ENCODE measurements at regions of chr22 and their contacts with region 1.

Region 1: DNA sequence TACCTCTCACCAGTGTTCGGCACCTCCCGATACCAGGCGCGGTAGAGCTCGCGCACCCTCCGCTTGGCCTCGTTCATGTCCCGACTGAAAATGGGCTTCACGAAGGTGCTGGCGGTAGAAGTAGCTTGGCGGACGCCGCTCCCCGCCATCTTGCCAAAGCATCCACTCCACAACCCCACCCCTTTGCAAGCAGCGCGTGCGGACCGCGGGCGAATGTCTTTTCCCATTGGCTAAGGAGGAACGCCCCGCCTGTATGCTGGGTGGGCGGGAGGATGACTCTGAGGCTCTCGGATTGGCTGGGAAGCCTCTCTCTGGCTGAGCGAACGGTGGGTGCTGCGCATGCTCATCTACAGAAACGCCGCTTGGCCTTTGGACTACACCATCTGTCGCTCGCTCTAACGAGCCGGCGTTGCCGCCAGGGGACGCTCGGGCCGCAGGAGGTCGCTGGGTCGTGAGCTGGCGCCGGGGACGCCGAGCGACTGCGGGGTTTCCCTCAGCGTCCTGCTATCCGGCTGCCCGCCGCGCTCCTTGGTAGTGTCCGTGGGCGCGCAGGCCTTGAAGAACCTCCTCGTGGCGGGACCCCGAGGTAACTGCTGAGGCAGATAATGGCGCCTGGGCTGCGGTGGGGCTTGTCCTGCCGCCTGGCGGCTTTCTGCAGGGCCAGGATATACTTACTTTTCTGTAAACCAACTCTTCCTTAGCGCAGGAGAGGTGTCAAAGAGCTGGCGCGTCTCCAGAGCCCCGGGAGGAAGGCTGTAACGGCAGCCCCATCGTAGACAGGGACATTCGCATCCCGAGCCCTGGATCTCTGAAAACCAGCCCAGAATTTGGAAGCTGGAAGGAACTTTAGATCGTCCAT is at the start of gene NDUFA6:
- DNase-seq: peak; percentile 99
- ATAC-seq: peak; percentile 87
- H3K4me3 ChIP-seq: peak within 1 kb of the TSS; percentile 74 to 95 (median 91)
- H3K4me3 Mint-ChIP-seq: peak within 1 kb of the TSS; percentile 98
- H3K27ac ChIP-seq: peak within 1 kb of the TSS; percentile 89 to 96
- H3K27ac Mint-ChIP-seq: peak within 1 kb of the TSS; percentile 99
- H3K4me1 ChIP-seq: peaks cover 17 to 22% of the 10 kb centered on the region in 2 donors
- H3K4me1 Mint-ChIP-seq: peaks cover 31% of the 10 kb centered on the region
- H3K27me3 ChIP-seq: no peaks in the 10 kb centered on the region
- H3K27me3 Mint-ChIP-seq: no peaks in the 10 kb centered on the region
- CTCF ChIP-seq: peak; percentile 92
- total RNA-seq, gene NDUFA6: 47.8 and 51.5 TPM in 2 replicates

Region 2: DNA sequence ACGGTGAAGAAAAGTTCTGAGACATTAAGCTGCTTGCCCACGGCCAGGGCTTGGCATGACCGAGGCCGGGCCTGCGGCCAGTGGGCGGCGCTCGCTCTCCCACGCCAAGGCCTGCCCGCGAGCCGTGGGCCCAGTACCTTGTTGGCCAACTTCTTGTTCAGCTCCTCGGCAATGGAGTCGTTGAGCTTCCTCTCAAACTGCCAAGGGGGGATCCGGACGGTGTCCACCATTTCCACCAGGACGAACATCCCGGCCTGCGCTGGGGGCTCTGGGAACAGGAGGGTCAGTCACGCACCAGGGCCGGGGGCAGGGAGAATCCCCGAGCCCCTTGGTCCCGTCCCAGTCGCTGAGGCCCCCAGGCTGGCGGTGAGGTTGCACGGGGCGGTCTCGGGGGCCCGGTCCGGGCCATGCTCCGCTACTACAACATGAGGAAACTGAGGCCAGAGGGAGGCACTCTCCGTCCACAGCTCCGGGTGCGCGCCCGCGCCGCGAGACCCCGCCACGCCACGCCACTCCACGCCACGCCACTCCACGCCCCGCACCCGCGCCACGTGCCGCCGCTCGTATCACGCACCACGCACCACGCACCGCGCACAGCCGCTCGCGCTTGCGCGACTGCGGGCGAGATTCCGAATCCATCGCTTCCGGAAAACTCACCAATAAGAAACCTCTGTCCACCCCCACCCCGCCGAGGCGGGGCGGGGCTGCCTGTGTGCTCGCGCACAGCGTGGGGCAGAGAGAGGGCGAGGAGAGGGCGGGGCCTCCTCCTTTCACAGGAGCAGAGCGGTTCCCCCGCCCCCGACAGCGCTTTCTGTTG is 546.8 kb before region 1 on chr22 and contains the start of gene POLR3H:
- CTCF ChIA-PET with region 1: no interaction called
- POLR2A ChIA-PET with region 1: no interaction called
- intact Hi-C with region 1: loop called (anchors 1 kb)
- DNase-seq: peak; percentile 97
- ATAC-seq: peak; percentile 99
- H3K4me3 ChIP-seq: peak within 1 kb of the TSS; percentile 74 to 95 (median 85)
- H3K4me3 Mint-ChIP-seq: peak within 1 kb of the TSS; percentile 100
- H3K27ac ChIP-seq: peak within 1 kb of the TSS; percentile 57 to 74
- H3K27ac Mint-ChIP-seq: peak within 1 kb of the TSS; percentile 97
- H3K4me1 ChIP-seq: peaks cover 17 to 21% of the 10 kb centered on the region in 2 donors
- H3K4me1 Mint-ChIP-seq: peaks cover 41% of the 10 kb centered on the region
- H3K27me3 ChIP-seq: no peaks in the 10 kb centered on the region
- H3K27me3 Mint-ChIP-seq: no peaks in the 10 kb centered on the region
- CTCF ChIP-seq: peak; percentile 42
- total RNA-seq, gene POLR3H: 32.1 and 35.6 TPM in 2 replicates

Region 3: DNA sequence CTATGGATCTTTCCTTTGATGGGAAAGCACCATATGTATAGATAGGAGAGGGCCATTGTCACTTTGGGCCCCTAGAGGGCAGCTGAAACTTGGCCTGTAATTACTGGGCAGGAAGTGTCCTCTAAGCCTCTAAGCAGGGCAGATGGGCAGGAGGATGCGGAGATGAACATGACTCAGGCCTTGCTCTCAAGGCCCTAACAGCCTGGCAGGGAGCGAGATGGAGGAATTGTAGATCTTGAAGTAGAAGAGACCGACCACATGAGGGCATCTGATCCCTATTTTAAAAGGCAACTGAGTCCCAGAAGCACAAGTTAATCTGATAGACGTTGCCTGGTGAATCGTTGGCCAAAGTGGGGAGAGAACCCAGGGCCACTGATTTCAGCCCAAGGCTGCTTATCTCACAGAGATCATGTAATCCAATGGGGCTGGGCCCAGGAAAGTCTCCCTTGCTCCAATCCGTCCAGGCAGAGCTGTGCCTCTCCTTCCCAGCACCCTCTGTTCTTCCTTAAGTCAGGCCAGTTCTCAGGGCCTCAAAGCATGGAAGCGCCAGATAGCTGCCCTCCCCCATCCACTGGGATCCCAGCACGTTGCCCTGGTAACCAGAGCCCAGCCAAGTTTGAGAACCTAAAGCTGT is 124.1 kb before region 1 on chr22:
- CTCF ChIA-PET with region 1: interaction called, 26 read pairs
- POLR2A ChIA-PET with region 1: no interaction called
- intact Hi-C with region 1: no loop called
- DNase-seq: peak; percentile 75
- ATAC-seq: peak; percentile 72
- H3K4me3 ChIP-seq: no peak overlapping the region
- H3K4me3 Mint-ChIP-seq: no peak overlapping the region
- H3K27ac ChIP-seq: no peak overlapping the region
- H3K27ac Mint-ChIP-seq: no peak overlapping the region
- H3K4me1 ChIP-seq: no peaks in the 10 kb centered on the region
- H3K4me1 Mint-ChIP-seq: no peaks in the 10 kb centered on the region
- H3K27me3 ChIP-seq: peaks cover 0 to 10% (median 0%) of the 10 kb centered on the region in 4 experiments
- H3K27me3 Mint-ChIP-seq: peaks cover 8% of the 10 kb centered on the region
- CTCF ChIP-seq: peak; percentile 51

Region 4: GRCh38 chr22:42079319-42080251 is 11.2 kb before region 1 on chr22 and contains the start of gene SMDT1:
- CTCF ChIA-PET with region 1: interaction called, 41 read pairs
- POLR2A ChIA-PET with region 1: interaction called, 45 read pairs
- intact Hi-C with region 1: loop called (anchors 1 kb)
- DNase-seq: peak; percentile 100
- ATAC-seq: peak; percentile 86
- H3K4me3 ChIP-seq: peak within 1 kb of the TSS; percentile 66 to 92 (median 86)
- H3K4me3 Mint-ChIP-seq: peak within 1 kb of the TSS; percentile 96
- H3K27ac ChIP-seq: peak within 1 kb of the TSS; percentile 99
- H3K27ac Mint-ChIP-seq: peak within 1 kb of the TSS; percentile 97
- H3K4me1 ChIP-seq: peaks cover 22 to 32% of the 10 kb centered on the region in 2 donors
- H3K4me1 Mint-ChIP-seq: peaks cover 41% of the 10 kb centered on the region
- H3K27me3 ChIP-seq: no peaks in the 10 kb centered on the region
- H3K27me3 Mint-ChIP-seq: no peaks in the 10 kb centered on the region
- CTCF ChIP-seq: no peak
- total RNA-seq, gene SMDT1: 133 and 140 TPM in 2 replicates

Region 5: GRCh38 chr22:42270512-42271417 is 179.9 kb after region 1 on chr22 and contains the start of gene TCF20:
- CTCF ChIA-PET with region 1: interaction called, 5 read pairs
- POLR2A ChIA-PET with region 1: no interaction called
- intact Hi-C with region 1: loop called (anchors 1 kb)
- DNase-seq: peak; percentile 90
- ATAC-seq: peak; percentile 81
- H3K4me3 ChIP-seq: peak within 1 kb of the TSS; percentile 34 to 93 (median 87)
- H3K4me3 Mint-ChIP-seq: peak within 1 kb of the TSS; percentile 91
- H3K27ac ChIP-seq: peak within 1 kb of the TSS; percentile 61 to 86
- H3K27ac Mint-ChIP-seq: peak within 1 kb of the TSS; percentile 87
- H3K4me1 ChIP-seq: peaks cover 14 to 19% of the 10 kb centered on the region in 2 donors
- H3K4me1 Mint-ChIP-seq: peaks cover 26% of the 10 kb centered on the region
- H3K27me3 ChIP-seq: no peaks in the 10 kb centered on the region
- H3K27me3 Mint-ChIP-seq: no peaks in the 10 kb centered on the region
- CTCF ChIP-seq: no peak
- total RNA-seq, gene TCF20: 67.0 and 81.3 TPM in 2 replicates

Region 6: DNA sequence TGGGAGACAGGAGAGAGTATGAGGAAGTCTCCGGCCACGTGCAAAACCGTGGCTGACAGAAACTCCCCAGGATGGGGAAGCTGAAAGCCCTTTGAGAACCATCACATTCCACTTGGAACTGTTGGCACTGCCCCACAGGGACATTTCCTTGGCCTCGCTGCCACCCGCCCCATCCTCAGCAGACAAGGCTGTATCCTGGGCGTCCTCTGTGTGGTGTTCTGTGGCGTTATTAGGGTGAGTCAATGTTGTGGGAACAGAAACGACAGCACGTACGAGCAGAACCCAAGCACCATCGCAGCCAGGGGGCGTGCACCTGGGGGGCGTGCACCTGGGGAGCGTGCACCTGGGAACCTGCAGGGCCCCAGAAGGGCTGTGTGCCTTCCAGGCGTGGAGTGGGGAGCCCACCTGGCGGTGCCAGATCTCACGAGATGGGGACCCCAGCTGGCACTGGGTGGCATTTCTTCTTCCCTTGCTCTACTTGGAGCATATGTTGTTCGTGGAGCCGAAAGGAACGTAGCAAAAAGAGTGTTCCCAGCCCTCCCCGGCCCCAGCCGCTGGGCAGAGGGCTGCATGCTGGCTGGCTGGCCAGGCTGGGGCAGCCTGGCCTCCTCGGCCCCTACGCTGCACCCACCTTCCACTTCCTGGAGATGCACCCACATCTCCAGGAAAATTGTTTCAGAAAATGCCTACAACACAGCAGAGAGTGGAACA is 306.0 kb after region 1 on chr22:
- CTCF ChIA-PET with region 1: interaction called, 4 read pairs
- POLR2A ChIA-PET with region 1: no interaction called
- intact Hi-C with region 1: loop called (anchors 2 kb)
- DNase-seq: peak; percentile 84
- ATAC-seq: peak; percentile 67
- H3K4me3 ChIP-seq: peak overlapping the region; percentile 38 to 78 (median 53)
- H3K4me3 Mint-ChIP-seq: peak overlapping the region; percentile 92
- H3K27ac ChIP-seq: peak overlapping the region; percentile 80 to 99
- H3K27ac Mint-ChIP-seq: peak overlapping the region; percentile 99
- H3K4me1 ChIP-seq: peaks cover 40 to 46% of the 10 kb centered on the region in 2 donors
- H3K4me1 Mint-ChIP-seq: peaks cover 51% of the 10 kb centered on the region
- H3K27me3 ChIP-seq: no peaks in the 10 kb centered on the region
- H3K27me3 Mint-ChIP-seq: no peaks in the 10 kb centered on the region
- CTCF ChIP-seq: peak; percentile 49

Region 7: GRCh38 chr22:42473484-42474193 is 382.8 kb after region 1 on chr22:
- CTCF ChIA-PET with region 1: interaction called, 7 read pairs
- POLR2A ChIA-PET with region 1: no interaction called
- intact Hi-C with region 1: loop called (anchors 1 kb)
- DNase-seq: peak; percentile 68
- ATAC-seq: peak; percentile 41
- H3K4me3 ChIP-seq: no peak overlapping the region
- H3K4me3 Mint-ChIP-seq: no peak overlapping the region
- H3K27ac ChIP-seq: no peak overlapping the region
- H3K27ac Mint-ChIP-seq: no peak overlapping the region
- H3K4me1 ChIP-seq: peaks cover 0 to 3% of the 10 kb centered on the region in 2 donors
- H3K4me1 Mint-ChIP-seq: peaks cover 4% of the 10 kb centered on the region
- H3K27me3 ChIP-seq: peaks cover 0 to 1% (median 0%) of the 10 kb centered on the region in 4 experiments
- H3K27me3 Mint-ChIP-seq: peaks cover 11% of the 10 kb centered on the region
- CTCF ChIP-seq: peak; percentile 78